ENCODE measurements at regions of chr3 and their contacts with region 1.

Region 1: DNA sequence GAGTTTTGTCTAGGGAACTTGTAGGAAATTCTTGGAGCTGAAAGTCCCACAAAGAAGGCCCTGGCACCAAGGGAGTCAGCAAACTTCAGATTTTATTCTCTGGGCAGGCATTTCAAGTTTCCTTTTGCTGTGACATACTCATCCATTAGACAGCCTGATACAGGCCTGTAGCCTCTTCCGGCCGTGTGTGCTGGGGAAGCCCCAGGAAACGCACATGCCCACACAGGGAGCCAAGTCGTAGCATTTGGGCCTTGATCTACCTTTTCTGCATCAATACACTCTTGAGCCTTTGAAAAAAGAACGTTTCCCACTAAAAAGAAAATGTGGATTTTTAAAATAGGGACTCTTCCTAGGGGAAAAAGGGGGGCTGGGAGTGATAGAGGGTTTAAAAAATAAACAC is 15.0 kb downstream of the TIGIT start:
- DNase-seq: peak; percentile 68 to 83 (median 72)
- H3K4me3 ChIP-seq: peak overlapping the region in 1 of 2 donors; percentile 12
- H3K4me3 Mint-ChIP-seq: peak overlapping the region; percentile 37 to 88 (median 68)
- H3K27ac ChIP-seq: peak overlapping the region; percentile 88
- H3K27ac Mint-ChIP-seq: peak overlapping the region; percentile 92 to 98 (median 95)
- H3K4me1 ChIP-seq: peaks cover 72% of the 10 kb centered on the region
- H3K4me1 Mint-ChIP-seq: peaks cover 53 to 66% (median 59%) of the 10 kb centered on the region in 4 donors
- H3K27me3 ChIP-seq: no peaks in the 10 kb centered on the region
- H3K27me3 Mint-ChIP-seq: no peaks in the 10 kb centered on the region

Region 2: DNA sequence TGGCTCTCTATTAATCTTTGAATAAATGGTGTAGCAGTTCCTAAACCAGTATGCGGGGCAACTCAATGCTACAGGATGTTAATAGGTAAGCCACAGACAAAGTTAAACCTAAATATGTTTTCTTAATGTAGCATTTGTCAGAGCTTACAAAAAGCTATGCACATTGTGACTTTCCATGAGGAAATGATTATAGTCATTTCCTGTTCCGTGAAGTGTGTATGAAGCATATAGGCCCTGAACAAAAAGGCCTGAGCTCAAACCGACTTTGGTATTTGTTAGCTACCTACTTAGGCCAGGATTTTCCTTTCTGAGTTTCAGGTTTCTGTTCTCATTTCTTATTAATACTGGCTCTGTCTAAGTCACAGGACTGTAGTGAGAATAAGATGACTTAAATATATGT is 85.7 kb before region 1 on chr3:
- CTCF ChIA-PET with region 1: interaction called, 10 read pairs
- POLR2A ChIA-PET with region 1: interaction called, 18 read pairs
- intact Hi-C with region 1: no loop called
- DNase-seq: peak; percentile 55 to 69 (median 56)
- H3K4me3 ChIP-seq: no peak overlapping the region
- H3K4me3 Mint-ChIP-seq: peak overlapping the region in 5 of 8 donors; percentile 31 to 78 (median 62)
- H3K27ac ChIP-seq: peak overlapping the region; percentile 51
- H3K27ac Mint-ChIP-seq: peak overlapping the region; percentile 78 to 96 (median 92)
- H3K4me1 ChIP-seq: peaks cover 98% of the 10 kb centered on the region
- H3K4me1 Mint-ChIP-seq: peaks cover 0 to 71% (median 32%) of the 10 kb centered on the region in 4 donors
- H3K27me3 ChIP-seq: no peaks in the 10 kb centered on the region
- H3K27me3 Mint-ChIP-seq: no peaks in the 10 kb centered on the region

Region 3: GRCh38 chr3:114285648-114286230 is 23.1 kb before region 1 on chr3:
- CTCF ChIA-PET with region 1: interaction called, 153 read pairs
- POLR2A ChIA-PET with region 1: interaction called, 168 read pairs
- intact Hi-C with region 1: loop called (anchors 2 kb)
- DNase-seq: peak in 3 of 5 donors; percentile 29 to 43 (median 37)
- H3K4me3 ChIP-seq: peak overlapping the region in 1 of 2 donors; percentile 21
- H3K4me3 Mint-ChIP-seq: peak overlapping the region; percentile 21 to 88 (median 86)
- H3K27ac ChIP-seq: peak overlapping the region; percentile 50
- H3K27ac Mint-ChIP-seq: peak overlapping the region; percentile 90 to 96 (median 95)
- H3K4me1 ChIP-seq: peaks cover 25% of the 10 kb centered on the region
- H3K4me1 Mint-ChIP-seq: peaks cover 11 to 29% (median 24%) of the 10 kb centered on the region in 4 donors
- H3K27me3 ChIP-seq: no peaks in the 10 kb centered on the region
- H3K27me3 Mint-ChIP-seq: no peaks in the 10 kb centered on the region

Region 4: GRCh38 chr3:114319453-114319852 is 10.6 kb after region 1 on chr3:
- CTCF ChIA-PET with region 1: interaction called, 7 read pairs
- POLR2A ChIA-PET with region 1: interaction called, 18 read pairs
- intact Hi-C with region 1: loop called (anchors 1 kb)
- DNase-seq: no peak
- H3K4me3 ChIP-seq: no peak overlapping the region
- H3K4me3 Mint-ChIP-seq: peak overlapping the region in 1 of 8 donors; percentile 60
- H3K27ac ChIP-seq: no peak overlapping the region
- H3K27ac Mint-ChIP-seq: peak overlapping the region in 2 of 7 donors; percentile 5 to 43
- H3K4me1 ChIP-seq: peaks cover 83% of the 10 kb centered on the region
- H3K4me1 Mint-ChIP-seq: peaks cover 26 to 67% (median 48%) of the 10 kb centered on the region in 4 donors
- H3K27me3 ChIP-seq: no peaks in the 10 kb centered on the region
- H3K27me3 Mint-ChIP-seq: no peaks in the 10 kb centered on the region

Measured in CD4-positive, alpha-beta memory T cell (primary cell).